Activated B cell treated with CpG ODN at 0.5 μM for 24 hours (primary cell): ENCODE measurements at regions of chr2 and their contacts with region 1.

Region 1: GRCh38 chr2:64750817-64751285 is 97.1 kb upstream of the SERTAD2 start:
- DNase-seq: peak; percentile 92
- ATAC-seq: peak; percentile 82
- H3K4me3 Mint-ChIP-seq: peak overlapping the region; percentile 98
- H3K27ac Mint-ChIP-seq: peak overlapping the region; percentile 98
- H3K4me1 Mint-ChIP-seq: peaks cover 26% of the 10 kb centered on the region
- H3K27me3 Mint-ChIP-seq: no peaks in the 10 kb centered on the region
- CTCF ChIP-seq: no peak

Region 2: GRCh38 chr2:64644177-64645004 is 106.5 kb before region 1 on chr2:
- CTCF ChIA-PET with region 1: interaction called, 69 read pairs
- POLR2A ChIA-PET with region 1: interaction called, 439 read pairs
- intact Hi-C with region 1: loop called (anchors 1 kb)
- DNase-seq: peak; percentile 48
- ATAC-seq: peak; percentile 45
- H3K4me3 Mint-ChIP-seq: peak overlapping the region; percentile 86
- H3K27ac Mint-ChIP-seq: peak overlapping the region; percentile 93
- H3K4me1 Mint-ChIP-seq: peaks cover 96% of the 10 kb centered on the region
- H3K27me3 Mint-ChIP-seq: no peaks in the 10 kb centered on the region
- CTCF ChIP-seq: no peak

Region 3: GRCh38 chr2:64704161-64704560 is 46.7 kb before region 1 on chr2:
- CTCF ChIA-PET with region 1: no interaction called
- POLR2A ChIA-PET with region 1: interaction called, 13 read pairs
- intact Hi-C with region 1: loop called (anchors 1 kb)
- DNase-seq: no peak
- ATAC-seq: no peak
- H3K4me3 Mint-ChIP-seq: no peak overlapping the region
- H3K27ac Mint-ChIP-seq: no peak overlapping the region
- H3K4me1 Mint-ChIP-seq: peaks cover 18% of the 10 kb centered on the region
- H3K27me3 Mint-ChIP-seq: no peaks in the 10 kb centered on the region
- CTCF ChIP-seq: no peak

Region 4: GRCh38 chr2:64819774-64820696 is 69.2 kb after region 1 on chr2:
- CTCF ChIA-PET with region 1: interaction called, 3 read pairs
- POLR2A ChIA-PET with region 1: interaction called, 11 read pairs
- intact Hi-C with region 1: loop called (anchors 1 kb)
- DNase-seq: no peak
- ATAC-seq: peak; percentile 94
- H3K4me3 Mint-ChIP-seq: peak overlapping the region; percentile 59
- H3K27ac Mint-ChIP-seq: peak overlapping the region; percentile 89
- H3K4me1 Mint-ChIP-seq: peaks cover 50% of the 10 kb centered on the region
- H3K27me3 Mint-ChIP-seq: no peaks in the 10 kb centered on the region
- CTCF ChIP-seq: no peak

Region 5: DNA sequence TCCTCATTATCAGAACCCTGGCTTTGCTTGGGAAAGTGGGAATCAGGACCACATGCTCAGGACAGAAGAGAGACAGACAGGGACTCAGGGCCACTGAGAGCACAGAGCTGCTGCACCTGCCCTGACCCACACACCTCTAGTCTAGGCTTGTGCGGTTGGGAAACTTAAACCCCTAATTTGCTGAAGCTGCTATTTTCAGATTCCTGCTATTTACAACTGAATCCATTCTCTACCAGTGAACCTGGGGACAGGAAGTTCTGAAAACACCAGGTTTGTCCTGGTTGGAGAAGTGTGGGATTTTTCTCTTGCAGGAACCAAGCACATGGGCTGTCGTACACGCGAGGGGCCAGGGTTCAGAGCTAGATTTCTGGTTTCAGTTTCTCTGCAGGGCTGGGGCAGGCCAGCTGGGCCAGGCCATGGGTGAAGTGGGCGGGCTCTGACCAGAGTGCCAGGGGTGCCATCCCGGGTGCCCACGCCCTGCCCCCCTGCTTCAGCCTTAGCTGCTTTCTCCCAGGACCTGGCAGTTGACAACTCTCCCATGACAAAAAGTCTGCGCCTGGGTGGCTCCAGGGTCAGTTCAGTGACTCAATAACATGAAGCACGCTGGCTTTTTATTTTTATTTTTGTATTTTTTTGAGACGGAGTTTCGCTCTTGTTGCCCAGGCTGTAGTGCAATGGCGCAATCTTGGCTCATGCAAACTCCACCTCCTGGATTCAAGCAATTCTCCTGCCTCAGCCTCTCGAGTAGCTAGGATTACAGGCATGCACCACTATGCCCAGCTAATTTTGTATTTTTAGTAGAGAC is 187.0 kb after region 1 on chr2:
- CTCF ChIA-PET with region 1: no interaction called
- POLR2A ChIA-PET with region 1: no interaction called
- intact Hi-C with region 1: loop called (anchors 5 kb)
- DNase-seq: peak; percentile 46
- ATAC-seq: peak; percentile 69
- H3K4me3 Mint-ChIP-seq: peak overlapping the region; percentile 62
- H3K27ac Mint-ChIP-seq: peak overlapping the region; percentile 91
- H3K4me1 Mint-ChIP-seq: peaks cover 92% of the 10 kb centered on the region
- H3K27me3 Mint-ChIP-seq: no peaks in the 10 kb centered on the region
- CTCF ChIP-seq: no peak